GM12878 (cell line): ENCODE measurements at regions of chr17 and their contacts with region 1.

Region 1: DNA sequence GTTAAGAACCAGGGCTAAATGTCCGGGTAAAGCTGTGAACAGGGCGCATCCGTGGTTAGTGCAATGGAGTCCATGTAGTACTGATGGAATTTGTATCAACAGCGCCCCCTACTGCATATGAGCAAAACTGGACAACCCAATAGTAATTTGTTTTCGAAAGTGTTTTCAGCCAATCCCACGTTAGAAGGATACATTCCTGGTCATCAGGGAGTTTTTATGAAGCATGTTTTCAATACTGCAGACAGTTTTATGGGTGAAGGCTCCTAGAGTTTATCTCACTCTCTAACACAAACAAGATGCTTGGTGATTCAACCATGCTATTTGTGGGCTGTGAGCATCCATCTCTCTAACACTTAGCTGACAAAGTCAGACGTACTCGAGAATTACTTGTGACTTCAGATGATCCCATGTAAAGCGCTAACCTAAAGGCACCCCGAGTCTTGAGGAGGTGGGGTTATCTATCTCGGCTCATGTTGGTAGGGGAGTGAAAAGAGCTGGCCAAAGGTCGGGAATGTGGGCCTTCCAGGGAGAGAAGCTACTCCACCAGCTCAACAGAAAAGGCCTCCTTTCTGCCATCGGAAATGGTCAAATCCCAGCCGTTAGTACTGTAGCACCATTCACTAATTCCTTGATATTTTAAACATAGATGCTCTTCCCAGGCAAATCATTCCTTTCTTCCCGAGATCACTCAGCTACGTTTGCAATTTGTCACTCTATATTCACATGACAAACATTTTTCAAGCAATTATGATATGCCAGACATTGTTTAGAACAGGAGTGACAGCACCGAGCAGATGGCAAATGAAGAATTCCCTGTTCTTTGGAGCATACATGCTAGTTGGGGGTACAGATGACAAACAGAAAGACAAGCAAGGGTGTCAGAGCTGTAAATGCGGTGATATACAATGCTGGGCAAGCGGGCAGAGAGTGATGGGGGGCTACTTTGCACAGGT is 46.9 kb upstream of the HNF1B start:
- DNase-seq: no peak
- ATAC-seq: peak; percentile 98
- H3K4me3 ChIP-seq: no peak overlapping the region
- H3K27ac ChIP-seq: no peak overlapping the region
- H3K4me1 ChIP-seq: no peaks in the 10 kb centered on the region
- H3K27me3 ChIP-seq: no peaks in the 10 kb centered on the region
- CTCF ChIP-seq: peak; percentile 67 to 86 (median 82)
- EP300 ChIP-seq: no peak
- POLR2A ChIP-seq: no peak
- RAD21 ChIP-seq: peak; percentile 94

Region 2: GRCh38 chr17:37527249-37527851 is 264.4 kb before region 1 on chr17:
- CTCF ChIA-PET with region 1: interaction called, 23 read pairs
- POLR2A ChIA-PET with region 1: no interaction called
- RAD21 ChIA-PET with region 1: interaction called, 4 read pairs
- SMC1A ChIA-PET with region 1: interaction called, 3 read pairs
- in situ Hi-C with region 1: loop called (anchors 5 kb)
- intact Hi-C with region 1: no loop called
- DNase-seq: no peak
- ATAC-seq: peak; percentile 85
- H3K4me3 ChIP-seq: no peak overlapping the region
- H3K27ac ChIP-seq: no peak overlapping the region
- H3K4me1 ChIP-seq: no peaks in the 10 kb centered on the region
- H3K27me3 ChIP-seq: no peaks in the 10 kb centered on the region
- CTCF ChIP-seq: peak; percentile 63 to 69 (median 63)
- EP300 ChIP-seq: no peak
- POLR2A ChIP-seq: no peak
- RAD21 ChIP-seq: peak; percentile 64

Region 3: DNA sequence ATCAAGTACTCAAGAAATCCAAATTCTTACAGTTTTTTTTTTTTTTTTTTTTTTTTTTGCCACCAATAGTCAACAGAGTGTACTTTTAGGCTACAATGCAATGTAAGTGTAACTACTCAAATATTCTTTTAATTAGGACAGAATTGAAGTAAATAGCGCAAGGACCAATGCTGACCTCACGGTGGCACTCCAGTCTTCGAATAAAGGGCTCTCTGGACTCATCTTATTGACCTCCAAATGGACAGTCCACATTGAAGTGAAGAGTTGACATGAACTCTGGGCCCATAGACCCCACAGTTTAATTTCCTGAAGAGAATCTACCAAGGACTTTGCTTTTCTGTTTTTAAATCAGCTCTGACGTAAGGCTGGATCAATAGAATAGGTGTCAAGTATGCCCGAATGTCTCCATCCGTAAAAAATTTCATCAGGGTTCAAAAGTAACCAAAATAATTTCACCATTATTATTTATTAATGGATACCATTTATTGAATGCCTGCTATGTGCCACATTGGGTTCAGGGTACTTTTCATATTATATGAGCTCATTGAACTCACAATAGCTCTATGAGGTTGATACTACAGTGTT is 141.2 kb before region 1 on chr17:
- CTCF ChIA-PET with region 1: interaction called, 49 read pairs
- POLR2A ChIA-PET with region 1: interaction called, 3 read pairs
- RAD21 ChIA-PET with region 1: interaction called, 14 read pairs
- SMC1A ChIA-PET with region 1: interaction called, 28 read pairs
- in situ Hi-C with region 1: loop called (anchors 5 kb)
- intact Hi-C with region 1: loop called (anchors 5 kb)
- DNase-seq: no peak
- ATAC-seq: peak; percentile 52
- H3K4me3 ChIP-seq: no peak overlapping the region
- H3K27ac ChIP-seq: no peak overlapping the region
- H3K4me1 ChIP-seq: no peaks in the 10 kb centered on the region
- H3K27me3 ChIP-seq: no peaks in the 10 kb centered on the region
- CTCF ChIP-seq: peak; percentile 27 to 47 (median 32); a peak in 5 of 6 replicates
- EP300 ChIP-seq: no peak
- POLR2A ChIP-seq: no peak
- RAD21 ChIP-seq: peak; percentile 47

Region 4: DNA sequence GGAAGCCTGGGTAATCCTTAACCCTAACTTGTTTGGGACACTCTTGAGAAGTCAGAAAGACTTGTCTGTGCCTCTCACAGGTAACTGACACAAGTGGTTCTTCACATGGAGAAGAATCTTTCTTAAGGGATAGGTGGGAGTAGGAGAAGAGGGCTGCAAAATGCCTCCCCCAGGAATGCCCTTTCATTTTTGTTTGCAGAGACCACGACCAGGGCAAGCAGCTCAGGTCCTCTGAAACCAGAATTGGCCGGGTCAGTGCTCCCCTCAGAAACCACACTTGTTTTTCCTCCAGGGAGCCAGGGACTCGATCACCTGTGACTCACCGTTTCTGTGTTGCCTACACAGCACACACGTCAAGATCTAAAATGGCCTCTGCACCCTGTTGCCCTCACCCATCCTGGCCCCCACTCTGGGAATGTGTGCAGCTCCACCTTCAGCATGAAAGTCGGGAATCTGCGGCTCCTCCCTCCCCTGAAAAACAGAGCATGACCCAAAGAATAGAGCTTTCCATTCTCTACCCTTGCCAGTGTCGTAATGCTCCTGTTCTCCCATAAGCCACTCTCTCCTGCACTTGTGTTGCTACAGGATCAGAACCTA is 83.0 kb before region 1 on chr17:
- CTCF ChIA-PET with region 1: interaction called, 78 read pairs
- POLR2A ChIA-PET with region 1: no interaction called
- RAD21 ChIA-PET with region 1: interaction called, 30 read pairs
- SMC1A ChIA-PET with region 1: interaction called, 41 read pairs
- in situ Hi-C with region 1: loop called (anchors 5 kb)
- intact Hi-C with region 1: no loop called
- DNase-seq: no peak
- ATAC-seq: peak; percentile 55
- H3K4me3 ChIP-seq: no peak overlapping the region
- H3K27ac ChIP-seq: no peak overlapping the region
- H3K4me1 ChIP-seq: no peaks in the 10 kb centered on the region
- H3K27me3 ChIP-seq: no peaks in the 10 kb centered on the region
- CTCF ChIP-seq: no peak
- EP300 ChIP-seq: no peak
- POLR2A ChIP-seq: no peak
- RAD21 ChIP-seq: no peak

Region 5: GRCh38 chr17:37770631-37771518 is 20.8 kb before region 1 on chr17:
- CTCF ChIA-PET with region 1: interaction called, 36 read pairs
- POLR2A ChIA-PET with region 1: no interaction called
- RAD21 ChIA-PET with region 1: interaction called, 16 read pairs
- SMC1A ChIA-PET with region 1: interaction called, 36 read pairs
- in situ Hi-C with region 1: no loop called
- intact Hi-C with region 1: no loop called
- DNase-seq: no peak
- ATAC-seq: 0 out of 3 replicates have a peak, but pooled peaks have one; percentile 5
- H3K4me3 ChIP-seq: no peak overlapping the region
- H3K27ac ChIP-seq: no peak overlapping the region
- H3K4me1 ChIP-seq: peaks cover 55% of the 10 kb centered on the region
- H3K27me3 ChIP-seq: no peaks in the 10 kb centered on the region
- CTCF ChIP-seq: peak; percentile 63 to 79 (median 74)
- EP300 ChIP-seq: no peak; a peak in 1 of 4 replicates
- POLR2A ChIP-seq: no peak
- RAD21 ChIP-seq: peak; percentile 55

Region 6: GRCh38 chr17:37818689-37819088 is 27.0 kb after region 1 on chr17:
- CTCF ChIA-PET with region 1: interaction called, 97 read pairs
- POLR2A ChIA-PET with region 1: interaction called, 3 read pairs
- RAD21 ChIA-PET with region 1: interaction called, 33 read pairs
- SMC1A ChIA-PET with region 1: interaction called, 25 read pairs
- in situ Hi-C with region 1: no loop called
- intact Hi-C with region 1: no loop called
- DNase-seq: no peak
- ATAC-seq: no peak
- H3K4me3 ChIP-seq: no peak overlapping the region
- H3K27ac ChIP-seq: peak overlapping the region; percentile 30; the same call in 1 of the 2 replicates
- H3K4me1 ChIP-seq: peaks cover 30% of the 10 kb centered on the region
- H3K27me3 ChIP-seq: no peaks in the 10 kb centered on the region
- CTCF ChIP-seq: no peak
- EP300 ChIP-seq: no peak
- POLR2A ChIP-seq: no peak
- RAD21 ChIP-seq: no peak

Region 7: GRCh38 chr17:38667099-38667786 is 875.5 kb after region 1 on chr17:
- CTCF ChIA-PET with region 1: no interaction called
- POLR2A ChIA-PET with region 1: no interaction called
- RAD21 ChIA-PET with region 1: no interaction called
- SMC1A ChIA-PET with region 1: no interaction called
- in situ Hi-C with region 1: no loop called
- intact Hi-C with region 1: no loop called
- DNase-seq: no peak
- ATAC-seq: peak; percentile 76
- H3K4me3 ChIP-seq: no peak overlapping the region
- H3K27ac ChIP-seq: no peak overlapping the region
- H3K4me1 ChIP-seq: peaks cover 5% of the 10 kb centered on the region
- H3K27me3 ChIP-seq: peaks cover 6 to 11% of the 10 kb centered on the region in 2 experiments; a peak in 3 of 4 replicates
- CTCF ChIP-seq: peak; percentile 100; a peak in 5 of 6 replicates
- EP300 ChIP-seq: no peak
- POLR2A ChIP-seq: no peak
- RAD21 ChIP-seq: peak; percentile 100